ENCODE measurements at regions of chr13 and their contacts with region 1.

Region 1: DNA sequence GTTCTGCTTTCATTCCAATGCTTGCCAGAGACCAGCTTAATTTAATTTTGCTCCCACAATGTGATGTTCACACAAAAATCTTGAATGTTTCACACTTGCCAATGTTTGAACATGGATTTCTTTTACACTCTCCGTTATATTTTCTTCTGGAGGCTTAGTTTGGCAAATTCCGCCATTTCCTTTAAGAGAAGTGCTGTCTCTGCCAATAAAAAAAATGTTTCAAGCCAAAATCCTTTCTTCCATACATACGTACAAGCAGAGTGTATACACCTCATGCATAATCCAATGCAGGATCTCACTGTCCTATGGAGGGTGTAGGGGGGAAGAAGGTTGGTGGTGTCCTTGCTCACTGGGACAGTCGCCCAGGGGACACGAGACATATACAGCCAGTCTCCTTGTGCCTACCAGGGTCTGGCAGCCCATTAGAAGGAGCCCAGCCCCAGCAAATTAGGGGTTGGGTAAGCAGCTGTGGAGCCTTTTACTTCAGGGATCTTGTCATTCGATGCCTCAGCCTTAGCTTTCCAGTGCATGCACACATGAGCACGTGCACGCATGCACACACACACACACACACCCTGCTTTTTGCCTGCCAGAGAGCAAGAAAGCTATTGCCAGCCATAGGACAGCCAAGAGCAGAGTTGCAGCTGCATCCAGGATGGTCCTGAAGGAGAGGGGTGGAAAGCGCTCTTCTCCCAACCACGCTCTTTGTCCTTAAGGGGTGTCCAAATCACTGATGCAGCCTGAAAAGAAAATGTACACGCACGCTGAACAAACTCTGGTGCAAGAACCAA is 208.3 kb downstream of the FOXO1 start:
- DNase-seq: no peak
- H3K4me3 ChIP-seq: no peak overlapping the region
- H3K27ac ChIP-seq: no peak overlapping the region
- H3K4me1 ChIP-seq: no peaks in the 10 kb centered on the region
- H3K27me3 ChIP-seq: no peaks in the 10 kb centered on the region
- CTCF ChIP-seq: no peak
- POLR2A ChIP-seq: no peak

Region 2: GRCh38 chr13:39777527-39778061 is 680.5 kb before region 1 on chr13:
- CTCF ChIA-PET with region 1: no interaction called
- POLR2A ChIA-PET with region 1: no interaction called
- dilution Hi-C with region 1: no loop called
- intact Hi-C with region 1: no loop called
- DNase-seq: peak; percentile 88
- H3K4me3 ChIP-seq: no peak overlapping the region
- H3K27ac ChIP-seq: peak overlapping the region; percentile 99
- H3K4me1 ChIP-seq: peaks cover 59% of the 10 kb centered on the region
- H3K27me3 ChIP-seq: no peaks in the 10 kb centered on the region
- CTCF ChIP-seq: peak; percentile 51 to 52
- POLR2A ChIP-seq: no peak

Region 3: GRCh38 chr13:40470660-40471059 is 12.5 kb after region 1 on chr13:
- CTCF ChIA-PET with region 1: interaction called, 12 read pairs
- POLR2A ChIA-PET with region 1: no interaction called
- dilution Hi-C with region 1: no loop called
- intact Hi-C with region 1: no loop called
- DNase-seq: no peak
- H3K4me3 ChIP-seq: no peak overlapping the region
- H3K27ac ChIP-seq: no peak overlapping the region
- H3K4me1 ChIP-seq: no peaks in the 10 kb centered on the region
- H3K27me3 ChIP-seq: no peaks in the 10 kb centered on the region
- CTCF ChIP-seq: no peak
- POLR2A ChIP-seq: no peak

Measured in endothelial cell of umbilical vein (primary cell).